ENCODE measurements at regions of chr15 and their contacts with region 1.

Region 1: DNA sequence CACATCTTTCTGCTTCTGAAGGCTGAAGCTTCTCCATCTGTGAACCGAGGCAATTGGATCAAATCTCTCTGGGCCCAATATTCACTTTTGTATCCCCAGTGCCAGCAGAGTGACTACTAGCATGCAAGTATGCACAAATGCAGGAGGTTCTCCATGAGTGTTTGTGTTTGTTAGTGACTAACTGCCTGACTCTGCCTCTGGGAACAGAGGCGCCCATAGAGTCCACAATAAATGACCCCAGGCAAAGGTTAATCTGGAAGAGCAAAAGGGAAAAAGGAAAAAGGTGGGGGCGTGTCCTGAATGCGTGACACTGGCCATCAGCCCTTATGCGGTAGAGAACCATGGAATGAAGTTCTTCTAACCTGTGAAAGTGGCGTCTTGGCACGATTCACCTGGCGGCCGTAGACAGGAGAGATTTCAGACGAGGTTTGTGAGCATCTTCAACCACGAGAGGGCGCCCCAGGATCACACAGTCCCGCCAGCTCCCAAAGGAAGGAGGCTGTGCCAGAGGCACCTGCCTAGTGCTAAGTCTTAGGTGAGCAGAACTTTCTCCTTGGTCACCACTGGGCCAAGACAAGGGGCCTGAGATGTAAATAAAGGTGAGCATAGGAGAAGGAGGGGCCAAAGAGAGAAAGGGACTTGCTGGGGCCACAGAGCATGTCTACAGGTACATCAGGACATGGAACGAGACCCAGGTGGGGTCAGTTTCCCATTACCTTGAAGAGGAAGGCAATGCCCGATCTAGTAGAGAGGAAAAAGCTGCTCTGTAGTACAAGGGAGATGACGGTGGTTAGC is 44.2 kb downstream of the RBPMS2 start:
- DNase-seq: peak; percentile 85
- ATAC-seq: peak; percentile 74

Region 2: GRCh38 chr15:64905119-64905831 is 174.1 kb after region 1 on chr15:
- intact Hi-C with region 1: loop called (anchors 2 kb)
- DNase-seq: peak; percentile 91
- ATAC-seq: peak; percentile 92

Measured in Right ventricle myocardium inferior (tissue), 1 donor.